IMR-90 (cell line): ENCODE measurements at regions of chr5 and their contacts with region 1.

Region 1: GRCh38 chr5:96439477-96440184 is 6.6 kb upstream of the PCSK1 start:
- DNase-seq: no peak
- ATAC-seq: no peak
- H3K4me3 ChIP-seq: no peak overlapping the region
- H3K27ac ChIP-seq: no peak overlapping the region
- H3K4me1 ChIP-seq: no peaks in the 10 kb centered on the region
- H3K27me3 ChIP-seq: peaks cover 26% of the 10 kb centered on the region
- CTCF ChIP-seq: peak; percentile 20; the same call in 1 of the 2 replicates
- POLR2A ChIP-seq: no peak
- RAD21 ChIP-seq: no peak

Region 2: DNA sequence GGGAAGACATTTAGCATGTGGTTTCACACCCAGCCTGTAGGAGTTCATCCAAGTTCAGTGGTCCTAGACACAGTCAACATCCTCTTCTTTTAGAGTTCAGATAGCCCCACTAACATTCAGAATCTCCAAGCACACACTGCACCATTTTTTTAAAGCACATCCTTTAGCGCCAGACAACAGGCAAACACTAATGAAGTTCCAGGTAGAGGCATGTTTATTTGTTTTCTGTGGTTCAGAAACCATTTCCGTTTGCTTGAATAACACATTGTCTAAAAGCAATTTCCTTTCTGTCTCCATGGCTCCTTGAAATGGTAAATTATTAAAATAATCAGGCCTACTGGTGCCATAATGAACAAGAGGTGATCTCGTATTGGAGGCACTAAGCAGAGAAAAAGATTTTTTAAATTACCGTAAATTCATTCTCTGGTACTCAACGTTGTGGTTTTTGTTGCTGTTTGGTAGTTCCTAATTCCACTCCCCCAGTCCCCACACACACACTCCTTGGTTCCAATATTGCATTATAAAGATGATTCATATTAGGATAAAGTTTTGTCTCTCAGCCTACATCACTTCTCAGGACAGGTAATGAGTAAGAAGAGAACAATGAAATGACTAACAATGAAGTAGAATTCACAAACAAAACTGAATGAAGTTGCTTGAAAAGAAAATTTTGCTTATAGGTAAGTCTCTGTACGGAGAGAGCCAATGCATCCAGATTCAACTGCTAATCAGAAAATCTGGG is 159.7 kb before region 1 on chr5:
- CTCF ChIA-PET with region 1: no interaction called
- POLR2A ChIA-PET with region 1: no interaction called
- dilution Hi-C with region 1: no loop called
- in situ Hi-C with region 1: no loop called
- intact Hi-C with region 1: no loop called
- DNase-seq: peak; percentile 34
- ATAC-seq: no peak
- H3K4me3 ChIP-seq: no peak overlapping the region
- H3K27ac ChIP-seq: no peak overlapping the region
- H3K4me1 ChIP-seq: peaks cover 4% of the 10 kb centered on the region; the same call in 1 of the 2 replicates
- H3K27me3 ChIP-seq: no peaks in the 10 kb centered on the region
- CTCF ChIP-seq: no peak
- POLR2A ChIP-seq: no peak
- RAD21 ChIP-seq: no peak

Region 3: DNA sequence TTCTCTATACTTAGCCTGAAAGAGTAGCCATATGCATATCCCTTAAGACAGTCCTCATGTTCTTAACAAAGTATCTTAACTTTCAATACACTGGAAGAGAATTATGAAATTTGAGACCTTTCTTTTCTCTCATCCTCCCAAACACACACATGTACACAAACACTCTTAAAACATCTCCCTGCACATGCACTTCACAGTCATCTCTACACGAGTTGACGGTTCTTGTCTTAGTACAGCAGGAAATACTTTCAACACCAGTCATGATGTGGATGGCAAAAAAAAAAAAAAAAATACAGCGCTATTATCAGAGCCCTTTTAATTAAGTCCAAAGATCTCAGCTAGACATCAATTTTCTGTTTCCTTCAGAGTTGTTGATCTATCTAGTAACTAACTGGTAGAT is 37.0 kb after region 1 on chr5:
- CTCF ChIA-PET with region 1: no interaction called
- POLR2A ChIA-PET with region 1: no interaction called
- dilution Hi-C with region 1: no loop called
- in situ Hi-C with region 1: no loop called
- intact Hi-C with region 1: loop called (anchors 5 kb)
- DNase-seq: peak; percentile 69
- ATAC-seq: peak; percentile 79
- H3K4me3 ChIP-seq: no peak overlapping the region
- H3K27ac ChIP-seq: no peak overlapping the region
- H3K4me1 ChIP-seq: no peaks in the 10 kb centered on the region
- H3K27me3 ChIP-seq: peaks cover 3% of the 10 kb centered on the region; the same call in 1 of the 2 replicates
- CTCF ChIP-seq: no peak
- POLR2A ChIP-seq: no peak
- RAD21 ChIP-seq: no peak

Region 4: DNA sequence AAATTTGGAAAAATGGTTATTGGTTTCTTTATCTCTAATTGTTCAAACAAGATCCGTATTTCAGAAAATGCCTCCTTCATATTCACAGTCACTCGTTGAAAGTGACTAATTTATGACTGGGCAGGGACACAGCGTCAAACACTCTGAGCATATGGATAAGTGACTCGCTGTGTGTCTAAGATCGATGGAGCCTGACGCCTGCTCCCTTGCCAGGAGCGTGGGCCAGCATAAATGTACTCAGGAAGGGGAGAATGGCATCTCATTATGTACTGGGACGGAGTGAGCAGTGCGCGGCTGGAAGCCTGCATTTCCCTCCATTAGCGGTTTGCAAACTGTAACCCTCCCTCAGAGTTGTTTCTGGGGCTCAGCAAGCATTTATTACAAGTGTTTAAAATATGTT is 142.7 kb after region 1 on chr5:
- CTCF ChIA-PET with region 1: no interaction called
- POLR2A ChIA-PET with region 1: no interaction called
- dilution Hi-C with region 1: no loop called
- in situ Hi-C with region 1: no loop called
- intact Hi-C with region 1: loop called (anchors 10 kb)
- DNase-seq: peak; percentile 55
- ATAC-seq: no peak
- H3K4me3 ChIP-seq: no peak overlapping the region
- H3K27ac ChIP-seq: no peak overlapping the region
- H3K4me1 ChIP-seq: peaks cover 6% of the 10 kb centered on the region
- H3K27me3 ChIP-seq: no peaks in the 10 kb centered on the region
- CTCF ChIP-seq: no peak
- POLR2A ChIP-seq: no peak
- RAD21 ChIP-seq: no peak